HepG2 (cell line): ENCODE measurements at regions of chr19 and their contacts with region 1.

Region 1: DNA sequence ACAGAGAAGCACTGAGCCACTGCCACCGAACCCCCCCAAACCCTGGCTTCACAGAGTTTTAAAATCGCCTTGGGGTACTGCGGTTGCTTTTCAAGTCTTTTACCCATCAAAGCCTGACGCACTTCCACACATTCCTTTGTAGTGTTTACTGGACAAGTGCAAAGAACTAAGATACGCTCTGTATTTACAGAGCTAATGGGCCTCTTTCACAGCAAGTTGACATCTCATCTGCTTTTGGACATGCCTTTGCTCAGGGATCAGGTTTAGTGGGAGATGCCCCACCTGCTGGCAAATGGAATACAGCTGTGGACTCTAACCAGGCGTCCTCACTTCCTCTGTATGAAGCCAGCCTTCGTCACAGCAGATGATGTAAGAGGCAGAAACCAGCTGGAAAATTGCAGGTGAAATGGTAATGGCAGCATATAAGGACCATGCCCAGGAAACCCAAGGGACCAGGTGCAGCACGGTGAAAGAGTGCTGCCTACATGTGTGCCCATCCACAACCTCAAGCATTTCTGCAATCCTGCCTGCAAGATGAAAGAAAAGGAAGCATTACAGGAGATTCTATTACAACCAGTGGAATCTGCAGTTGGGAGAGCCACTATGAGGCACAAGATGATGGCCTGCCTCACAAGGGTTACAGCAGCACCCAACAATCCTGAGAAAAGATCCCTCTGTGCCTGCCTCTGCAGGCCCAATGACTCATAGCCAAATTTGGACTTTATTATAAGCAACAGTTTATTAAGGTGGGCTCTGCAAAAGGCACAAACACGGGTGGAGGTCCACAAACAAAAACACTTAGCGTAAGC is 34.7 kb downstream of the BRD4 start:
- DNase-seq: peak; percentile 99
- ATAC-seq: peak; percentile 87
- H3K4me3 ChIP-seq: peak overlapping the region in 1 of 3 experiments; percentile 58; a peak in 2 of 6 replicates
- H3K27ac ChIP-seq: peak overlapping the region; percentile 97
- H3K4me1 ChIP-seq: peaks cover 100% of the 10 kb centered on the region
- H3K27me3 ChIP-seq: no peaks in the 10 kb centered on the region
- CTCF ChIP-seq: peak; percentile 82
- EP300 ChIP-seq: peak; percentile 82 to 97; a peak in 3 of 4 replicates
- POLR2A ChIP-seq: no peak
- RAD21 ChIP-seq: peak; percentile 72

Region 2: GRCh38 chr19:15264061-15264932 is 33.3 kb before region 1 on chr19:
- CTCF ChIA-PET with region 1: interaction called, 8 read pairs
- POLR2A ChIA-PET with region 1: interaction called, 7 read pairs
- in situ Hi-C with region 1: no loop called
- intact Hi-C with region 1: loop called (anchors 1 kb)
- DNase-seq: peak; percentile 56
- ATAC-seq: peak; percentile 74
- H3K4me3 ChIP-seq: no peak overlapping the region
- H3K27ac ChIP-seq: no peak overlapping the region
- H3K4me1 ChIP-seq: peaks cover 23% of the 10 kb centered on the region
- H3K27me3 ChIP-seq: no peaks in the 10 kb centered on the region
- CTCF ChIP-seq: peak; percentile 91
- EP300 ChIP-seq: no peak
- POLR2A ChIP-seq: no peak
- RAD21 ChIP-seq: peak; percentile 83

Region 3: DNA sequence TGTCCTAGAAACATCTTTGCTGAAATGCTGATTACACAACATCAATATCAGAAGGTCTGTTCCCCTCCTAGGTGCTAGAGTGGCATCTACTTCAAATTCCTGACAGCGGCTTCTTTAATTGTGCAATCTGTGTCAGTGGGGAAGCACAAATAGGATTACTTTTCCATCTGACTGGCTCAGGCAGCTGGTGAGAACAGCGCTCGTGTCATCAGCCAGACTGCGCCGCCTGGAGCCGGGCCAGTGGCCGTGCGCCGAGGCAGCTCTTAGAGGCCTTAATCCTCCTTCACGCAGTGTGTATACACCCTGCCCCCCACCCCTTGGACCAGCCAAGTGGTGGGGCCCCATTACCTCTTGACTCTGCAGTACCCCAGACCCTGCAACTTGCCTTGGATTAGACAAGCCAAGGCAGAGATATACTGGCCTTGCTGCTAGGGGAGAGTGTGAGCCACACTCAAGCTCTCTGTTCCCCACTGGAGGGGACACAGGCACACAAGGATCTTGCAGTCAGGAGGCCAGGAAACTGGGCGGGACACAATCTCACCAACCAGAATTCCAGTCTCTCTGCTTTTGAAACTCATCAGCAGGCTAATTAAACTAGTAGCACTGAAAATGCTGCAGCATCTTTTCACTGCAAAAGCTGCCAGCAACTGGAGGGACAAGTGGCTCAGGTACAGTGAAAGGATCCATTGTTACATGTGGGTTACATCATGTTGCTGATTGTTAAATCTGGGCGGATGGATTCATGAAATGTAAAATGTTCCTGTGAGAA is 16.5 kb before region 1 on chr19:
- CTCF ChIA-PET with region 1: interaction called, 4 read pairs
- POLR2A ChIA-PET with region 1: interaction called, 54 read pairs
- in situ Hi-C with region 1: no loop called
- intact Hi-C with region 1: loop called (anchors 2 kb)
- DNase-seq: peak; percentile 55
- ATAC-seq: peak; percentile 60
- H3K4me3 ChIP-seq: 0 out of 6 replicates have a peak overlapping the region, but pooled peaks of 1 of the 3 experiments have one; percentile 7
- H3K27ac ChIP-seq: peak overlapping the region; percentile 70
- H3K4me1 ChIP-seq: peaks cover 95% of the 10 kb centered on the region
- H3K27me3 ChIP-seq: no peaks in the 10 kb centered on the region
- CTCF ChIP-seq: peak; percentile 42
- EP300 ChIP-seq: no peak; a peak in 1 of 4 replicates
- POLR2A ChIP-seq: no peak
- RAD21 ChIP-seq: no peak

Region 4: GRCh38 chr19:15332311-15332996 is 34.8 kb after region 1 on chr19 and contains the start of gene BRD4:
- CTCF ChIA-PET with region 1: no interaction called
- POLR2A ChIA-PET with region 1: interaction called, 7 read pairs
- in situ Hi-C with region 1: loop called (anchors 5 kb)
- intact Hi-C with region 1: loop called (anchors 5 kb)
- DNase-seq: no peak
- ATAC-seq: peak; percentile 66
- H3K4me3 ChIP-seq: peak within 1 kb of the TSS; percentile 86 to 99 (median 99)
- H3K27ac ChIP-seq: peak within 1 kb of the TSS; percentile 76
- H3K4me1 ChIP-seq: peaks cover 44% of the 10 kb centered on the region
- H3K27me3 ChIP-seq: no peaks in the 10 kb centered on the region; a peak in 1 of 5 replicates
- CTCF ChIP-seq: no peak
- EP300 ChIP-seq: no peak
- POLR2A ChIP-seq: peak in 1 of 2 experiments; percentile 63; a peak in 2 of 4 replicates
- RAD21 ChIP-seq: no peak
- total RNA-seq, gene BRD4: 11.4 TPM in 2 replicates

Region 5: GRCh38 chr19:15488489-15489224 is 191.0 kb after region 1 on chr19:
- CTCF ChIA-PET with region 1: no interaction called
- POLR2A ChIA-PET with region 1: no interaction called
- in situ Hi-C with region 1: no loop called
- intact Hi-C with region 1: no loop called
- DNase-seq: no peak
- ATAC-seq: no peak
- H3K4me3 ChIP-seq: no peak overlapping the region
- H3K27ac ChIP-seq: no peak overlapping the region
- H3K4me1 ChIP-seq: peaks cover 13% of the 10 kb centered on the region
- H3K27me3 ChIP-seq: no peaks in the 10 kb centered on the region
- CTCF ChIP-seq: no peak
- EP300 ChIP-seq: no peak
- POLR2A ChIP-seq: no peak
- RAD21 ChIP-seq: no peak

Region 6: DNA sequence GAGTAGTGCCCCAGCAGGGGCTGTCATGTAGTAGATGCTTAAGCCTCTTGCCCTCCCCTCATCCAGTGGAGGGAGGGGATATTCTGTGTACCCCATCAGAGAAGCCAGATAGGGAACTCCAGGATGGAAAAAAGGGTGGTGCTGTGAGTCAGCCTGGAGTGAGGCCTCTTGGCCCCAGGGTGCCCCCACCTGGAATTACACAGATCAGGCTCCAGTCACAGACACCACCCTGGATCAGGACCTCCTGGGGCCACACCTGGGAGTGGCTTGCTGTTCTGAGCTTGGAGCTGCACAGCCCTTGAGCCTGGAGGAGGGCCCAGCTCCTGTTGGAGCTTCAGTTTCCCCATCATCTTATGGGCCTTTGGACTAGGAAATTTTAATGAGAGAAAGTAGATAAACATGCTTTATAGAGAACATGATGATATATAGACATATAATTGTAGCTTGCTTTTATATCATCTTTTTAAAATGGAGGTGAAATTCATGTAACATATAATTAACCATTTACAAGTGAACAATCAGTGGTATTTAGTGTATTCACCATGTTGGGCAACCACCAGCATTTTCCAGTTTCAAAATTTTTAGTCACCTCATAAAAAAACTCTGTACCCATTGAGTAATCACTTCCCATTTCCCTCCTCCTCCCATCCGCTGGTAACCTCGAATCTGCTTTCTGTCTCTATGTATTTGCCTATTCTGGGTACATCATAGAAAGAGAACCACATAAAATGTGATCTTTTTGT is 235.3 kb after region 1 on chr19:
- CTCF ChIA-PET with region 1: no interaction called
- POLR2A ChIA-PET with region 1: no interaction called
- in situ Hi-C with region 1: no loop called
- intact Hi-C with region 1: no loop called
- DNase-seq: no peak
- ATAC-seq: peak; percentile 41; the same call in 1 of the 3 replicates
- H3K4me3 ChIP-seq: no peak overlapping the region
- H3K27ac ChIP-seq: no peak overlapping the region
- H3K4me1 ChIP-seq: no peaks in the 10 kb centered on the region
- H3K27me3 ChIP-seq: 0 out of 5 replicates have a peak, but pooled peaks cover 0 to 4% of the 10 kb centered on the region in 2 experiments
- CTCF ChIP-seq: peak; percentile 37
- EP300 ChIP-seq: no peak
- POLR2A ChIP-seq: no peak
- RAD21 ChIP-seq: no peak